CD14-positive monocyte (primary cell): ENCODE measurements at regions of chr1 and their contacts with region 1.

Region 1: DNA sequence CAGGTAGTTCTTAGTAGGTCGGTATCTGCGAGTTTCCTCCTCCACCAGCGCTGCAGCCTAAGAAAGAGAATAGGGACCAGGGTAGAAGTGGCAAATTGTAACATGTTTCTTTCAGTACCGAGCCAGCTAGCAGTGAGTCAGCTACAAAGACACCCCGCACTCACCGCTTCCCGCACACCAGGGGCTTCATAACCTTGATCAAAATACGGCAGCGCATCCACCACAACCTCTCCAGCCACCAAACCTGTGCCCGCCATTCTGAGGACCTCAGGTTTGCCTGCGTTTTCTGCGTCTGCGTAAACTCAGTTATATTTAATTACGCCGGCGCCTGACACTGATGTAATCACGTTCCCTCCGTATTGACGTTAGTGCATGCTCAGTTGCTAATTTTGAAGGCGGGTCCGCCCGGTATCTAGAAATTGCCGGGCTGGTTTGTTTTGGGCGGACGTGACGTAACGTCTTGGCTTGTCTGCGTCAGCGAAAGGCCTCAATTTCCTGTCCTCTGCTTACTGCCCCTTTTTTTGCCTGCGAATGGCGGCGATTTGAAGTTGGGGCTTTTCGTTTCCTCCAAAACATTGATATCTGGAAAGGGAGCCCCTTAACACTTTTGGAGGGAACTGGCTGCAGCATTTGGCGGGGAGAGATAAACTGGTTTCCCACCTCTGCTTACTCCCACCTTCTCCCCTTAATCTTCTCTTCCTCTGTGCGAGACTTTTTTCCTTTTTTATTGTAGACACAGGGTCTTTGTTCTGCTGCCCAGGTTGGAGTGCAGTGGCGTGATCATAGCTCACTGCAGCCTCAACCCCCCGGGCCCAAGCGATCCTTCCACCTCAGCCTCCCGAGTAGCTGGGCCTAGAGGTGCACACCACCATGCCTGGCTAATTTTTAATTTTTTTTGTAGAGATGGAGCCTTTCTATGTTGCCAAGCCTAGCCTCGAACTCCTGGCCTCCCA is at the start of gene BCAS2:
- DNase-seq: peak; percentile 97 to 98 (median 98)
- H3K4me3 ChIP-seq: peak within 1 kb of the TSS; percentile 73 to 96 (median 93)
- H3K4me3 Mint-ChIP-seq: peak within 1 kb of the TSS; percentile 90 to 98
- H3K27ac ChIP-seq: peak within 1 kb of the TSS; percentile 75 to 96
- H3K27ac Mint-ChIP-seq: peak within 1 kb of the TSS; percentile 96 to 100 (median 99)
- H3K4me1 ChIP-seq: peaks cover 9 to 21% of the 10 kb centered on the region in 2 donors
- H3K4me1 Mint-ChIP-seq: peaks cover 9% of the 10 kb centered on the region
- H3K27me3 ChIP-seq: peaks cover 0 to 6% of the 10 kb centered on the region in 2 donors
- H3K27me3 Mint-ChIP-seq: peaks cover 11 to 13% (median 11%) of the 10 kb centered on the region in 3 donors
- CTCF ChIP-seq: no peak
- polyA plus RNA-seq, gene BCAS2: 22.1 to 55.7 (median 47.6) TPM

Region 2: GRCh38 chr1:114219172-114219868 is 362.3 kb before region 1 on chr1:
- intact Hi-C with region 1: no loop called
- DNase-seq: no peak
- H3K4me3 ChIP-seq: no peak overlapping the region
- H3K4me3 Mint-ChIP-seq: peak overlapping the region in 1 of 2 donors; percentile 16
- H3K27ac ChIP-seq: no peak overlapping the region
- H3K27ac Mint-ChIP-seq: no peak overlapping the region
- H3K4me1 ChIP-seq: no peaks in the 10 kb centered on the region
- H3K4me1 Mint-ChIP-seq: peaks cover 11% of the 10 kb centered on the region
- H3K27me3 ChIP-seq: no peaks in the 10 kb centered on the region
- H3K27me3 Mint-ChIP-seq: peaks cover 2 to 5% (median 2%) of the 10 kb centered on the region in 3 donors
- CTCF ChIP-seq: no peak

Region 3: GRCh38 chr1:114511032-114511785 is 70.4 kb before region 1 on chr1 and contains the start of gene TRIM33:
- intact Hi-C with region 1: loop called in 1 of 2 experiments (anchors 10 kb)
- DNase-seq: peak; percentile 89 to 93 (median 90)
- H3K4me3 ChIP-seq: peak within 1 kb of the TSS; percentile 88 to 98 (median 94)
- H3K4me3 Mint-ChIP-seq: peak within 1 kb of the TSS; percentile 96 to 98
- H3K27ac ChIP-seq: peak within 1 kb of the TSS; percentile 97 to 99
- H3K27ac Mint-ChIP-seq: peak within 1 kb of the TSS; percentile 96 to 99 (median 98)
- H3K4me1 ChIP-seq: peaks cover 29 to 42% of the 10 kb centered on the region in 2 donors
- H3K4me1 Mint-ChIP-seq: peaks cover 44% of the 10 kb centered on the region
- H3K27me3 ChIP-seq: no peaks in the 10 kb centered on the region
- H3K27me3 Mint-ChIP-seq: peaks cover 0 to 12% (median 2%) of the 10 kb centered on the region in 3 donors
- CTCF ChIP-seq: no peak
- polyA plus RNA-seq, gene TRIM33: 11.8 to 16.5 (median 13.7) TPM

Region 4: DNA sequence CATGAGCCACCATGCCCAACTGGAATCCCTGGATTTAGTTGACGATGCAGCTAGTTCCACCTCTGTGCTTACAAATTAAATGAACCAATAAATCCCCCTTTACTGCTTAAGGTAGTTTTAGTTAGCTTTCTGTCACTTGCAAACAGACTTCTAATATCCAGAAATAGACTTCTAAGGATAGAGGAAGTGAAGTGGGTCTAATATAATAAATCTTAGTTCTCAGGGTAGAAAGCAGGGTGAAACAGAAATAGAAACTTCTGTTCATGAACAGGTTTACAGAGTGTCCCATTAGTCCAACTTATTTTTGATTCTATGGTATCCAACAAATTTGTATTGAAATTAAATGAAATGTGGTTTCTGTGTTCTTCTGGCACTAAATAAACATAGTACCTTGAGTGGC is 20.3 kb before region 1 on chr1:
- intact Hi-C with region 1: no loop called
- DNase-seq: no peak
- H3K4me3 ChIP-seq: no peak overlapping the region
- H3K4me3 Mint-ChIP-seq: no peak overlapping the region
- H3K27ac ChIP-seq: no peak overlapping the region
- H3K27ac Mint-ChIP-seq: no peak overlapping the region
- H3K4me1 ChIP-seq: peaks cover 13 to 16% of the 10 kb centered on the region in 2 donors
- H3K4me1 Mint-ChIP-seq: peaks cover 26% of the 10 kb centered on the region
- H3K27me3 ChIP-seq: no peaks in the 10 kb centered on the region
- H3K27me3 Mint-ChIP-seq: peaks cover 0 to 4% (median 0%) of the 10 kb centered on the region in 3 donors
- CTCF ChIP-seq: no peak

Region 5: DNA sequence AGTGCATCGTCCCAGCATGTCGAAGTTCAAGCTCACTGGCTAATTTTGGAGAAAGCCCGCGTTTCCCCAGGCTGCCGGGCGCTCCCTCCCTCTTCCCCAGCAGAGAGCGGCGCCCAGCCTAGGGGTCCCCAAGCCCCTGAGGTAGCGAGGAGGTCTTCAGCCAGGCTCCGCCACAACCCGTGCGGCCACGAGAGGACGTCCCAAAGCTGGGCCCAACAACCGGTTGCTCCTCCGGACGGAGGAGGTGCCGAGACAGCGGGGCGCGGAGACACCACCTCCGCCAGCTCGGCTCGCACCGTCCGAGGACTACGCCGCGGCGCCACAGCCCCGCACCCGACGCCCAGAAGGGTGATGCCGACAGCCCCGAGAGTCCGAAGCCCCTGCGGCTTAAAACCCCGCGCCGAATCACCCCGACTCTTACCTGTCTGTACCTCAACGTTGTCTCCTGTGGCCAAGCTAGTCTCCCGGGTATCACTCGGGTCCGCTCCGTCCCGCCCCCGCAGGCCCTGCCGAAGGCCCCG is 88.0 kb after region 1 on chr1 and contains the start of gene DENND2C:
- intact Hi-C with region 1: loop called in 1 of 2 experiments (anchors 10 kb)
- DNase-seq: no peak
- H3K4me3 ChIP-seq: peak within 1 kb of the TSS; percentile 44 to 84 (median 57)
- H3K4me3 Mint-ChIP-seq: peak within 1 kb of the TSS; percentile 88 to 93
- H3K27ac ChIP-seq: peak within 1 kb of the TSS in 1 of 2 donors; percentile 27
- H3K27ac Mint-ChIP-seq: peak within 1 kb of the TSS in 5 of 7 donors; percentile 47 to 74 (median 60)
- H3K4me1 ChIP-seq: peaks cover 10 to 14% of the 10 kb centered on the region in 2 donors
- H3K4me1 Mint-ChIP-seq: peaks cover 13% of the 10 kb centered on the region
- H3K27me3 ChIP-seq: peaks cover 4 to 27% of the 10 kb centered on the region in 2 donors
- H3K27me3 Mint-ChIP-seq: peaks cover 24 to 43% (median 31%) of the 10 kb centered on the region in 3 donors
- CTCF ChIP-seq: no peak
- polyA plus RNA-seq, gene DENND2C: 0.03 to 0.07 (median 0.06) TPM

Region 6: DNA sequence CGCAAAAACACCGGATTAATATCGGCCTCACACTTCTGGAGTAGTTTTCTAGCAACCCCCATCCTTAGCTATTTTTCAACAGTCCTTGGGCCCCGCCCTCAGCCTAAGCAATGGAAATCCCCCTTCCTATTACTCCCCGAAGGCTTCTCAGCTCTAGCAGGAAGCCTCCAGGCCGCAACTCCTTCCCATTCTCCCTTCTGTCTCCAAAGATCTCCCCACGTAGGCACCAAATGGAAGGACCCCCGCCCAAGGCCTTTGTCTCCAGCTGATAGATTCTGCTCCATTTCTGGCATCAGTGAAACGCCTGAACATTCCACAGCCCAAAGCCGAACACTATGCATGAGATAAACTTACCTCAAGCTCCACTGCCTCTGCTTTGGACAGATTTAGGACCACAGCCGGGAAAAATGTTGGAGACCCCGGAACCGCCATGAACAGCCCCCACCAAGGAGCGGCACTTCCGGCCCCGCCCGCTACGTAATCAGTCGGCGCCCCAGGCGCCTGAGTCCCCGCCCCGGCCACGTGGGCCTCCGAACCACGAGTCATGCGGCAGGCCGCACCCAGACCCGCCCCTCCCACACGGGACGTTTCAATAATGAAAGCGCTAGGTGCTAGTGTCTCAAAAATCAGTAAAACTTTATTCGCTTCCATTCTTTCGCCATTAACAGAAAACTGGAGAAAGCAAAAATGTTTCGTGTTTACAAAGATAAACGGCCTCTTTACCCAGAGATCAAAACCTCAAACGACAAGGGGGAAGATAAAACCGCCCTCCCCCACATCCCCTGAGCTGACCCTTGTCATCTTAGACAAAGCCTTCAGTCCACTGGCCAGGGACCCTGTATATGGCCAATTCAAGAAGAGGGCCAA is 134.9 kb after region 1 on chr1 and contains the start of gene NRAS:
- intact Hi-C with region 1: loop called in 1 of 2 experiments (anchors 5 kb)
- DNase-seq: peak; percentile 91 to 94 (median 93)
- H3K4me3 ChIP-seq: peak within 1 kb of the TSS; percentile 85 to 100 (median 92)
- H3K4me3 Mint-ChIP-seq: peak within 1 kb of the TSS; percentile 96 to 98
- H3K27ac ChIP-seq: peak within 1 kb of the TSS; percentile 93 to 99
- H3K27ac Mint-ChIP-seq: peak within 1 kb of the TSS; percentile 97 to 100 (median 99)
- H3K4me1 ChIP-seq: peaks cover 13 to 16% of the 10 kb centered on the region in 2 donors
- H3K4me1 Mint-ChIP-seq: peaks cover 14% of the 10 kb centered on the region
- H3K27me3 ChIP-seq: no peaks in the 10 kb centered on the region
- H3K27me3 Mint-ChIP-seq: peaks cover 0 to 1% (median 0%) of the 10 kb centered on the region in 3 donors
- CTCF ChIP-seq: no peak
- polyA plus RNA-seq, gene NRAS: 12.2 to 42.7 (median 40.8) TPM

Region 7: GRCh38 chr1:114757455-114758250 is 176.0 kb after region 1 on chr1 and contains the start of gene CSDE1:
- intact Hi-C with region 1: loop called (anchors 5 kb)
- DNase-seq: peak; percentile 99 to 100 (median 99)
- H3K4me3 ChIP-seq: peak within 1 kb of the TSS; percentile 88 to 98 (median 97)
- H3K4me3 Mint-ChIP-seq: peak within 1 kb of the TSS; percentile 95 to 98
- H3K27ac ChIP-seq: peak within 1 kb of the TSS; percentile 99 to 100
- H3K27ac Mint-ChIP-seq: peak within 1 kb of the TSS; percentile 99 to 100 (median 100)
- H3K4me1 ChIP-seq: peaks cover 31 to 44% of the 10 kb centered on the region in 2 donors
- H3K4me1 Mint-ChIP-seq: peaks cover 46% of the 10 kb centered on the region
- H3K27me3 ChIP-seq: no peaks in the 10 kb centered on the region
- H3K27me3 Mint-ChIP-seq: no peaks in the 10 kb centered on the region
- CTCF ChIP-seq: no peak
- polyA plus RNA-seq, gene CSDE1: 177 to 324 (median 251) TPM

Region 8: DNA sequence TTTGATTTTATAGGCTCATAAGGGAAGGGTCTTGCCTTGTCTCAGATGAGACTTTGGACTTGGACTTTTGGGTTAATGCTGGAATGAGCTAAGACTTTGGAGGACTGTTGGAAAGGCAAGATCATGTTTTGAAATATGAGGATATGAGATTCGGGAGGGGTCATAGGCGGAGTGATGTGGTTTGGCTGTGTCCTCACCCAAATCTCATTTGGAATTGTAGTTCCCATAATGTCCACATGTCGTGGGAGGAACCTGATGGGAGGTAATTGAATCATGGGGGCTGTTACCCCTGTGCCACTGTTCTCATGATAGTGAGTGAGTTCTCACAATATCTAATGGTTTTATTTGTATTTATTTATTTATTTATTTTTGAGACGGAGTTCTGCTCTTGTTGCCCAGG is 183.1 kb after region 1 on chr1:
- intact Hi-C with region 1: loop called (anchors 5 kb)
- DNase-seq: no peak
- H3K4me3 ChIP-seq: no peak overlapping the region
- H3K4me3 Mint-ChIP-seq: no peak overlapping the region
- H3K27ac ChIP-seq: no peak overlapping the region
- H3K27ac Mint-ChIP-seq: no peak overlapping the region
- H3K4me1 ChIP-seq: no peaks in the 10 kb centered on the region
- H3K4me1 Mint-ChIP-seq: no peaks in the 10 kb centered on the region
- H3K27me3 ChIP-seq: no peaks in the 10 kb centered on the region
- H3K27me3 Mint-ChIP-seq: peaks cover 2 to 6% (median 2%) of the 10 kb centered on the region in 3 donors
- CTCF ChIP-seq: no peak

Region 9: GRCh38 chr1:114771992-114772391 is 190.4 kb after region 1 on chr1:
- intact Hi-C with region 1: loop called in 1 of 2 experiments (anchors 5 kb)
- DNase-seq: no peak
- H3K4me3 ChIP-seq: no peak overlapping the region
- H3K4me3 Mint-ChIP-seq: no peak overlapping the region
- H3K27ac ChIP-seq: no peak overlapping the region
- H3K27ac Mint-ChIP-seq: no peak overlapping the region
- H3K4me1 ChIP-seq: no peaks in the 10 kb centered on the region
- H3K4me1 Mint-ChIP-seq: no peaks in the 10 kb centered on the region
- H3K27me3 ChIP-seq: no peaks in the 10 kb centered on the region
- H3K27me3 Mint-ChIP-seq: peaks cover 0 to 1% (median 0%) of the 10 kb centered on the region in 3 donors
- CTCF ChIP-seq: no peak